ENCODE measurements at regions of chr6 and their contacts with region 1.

Region 1: DNA sequence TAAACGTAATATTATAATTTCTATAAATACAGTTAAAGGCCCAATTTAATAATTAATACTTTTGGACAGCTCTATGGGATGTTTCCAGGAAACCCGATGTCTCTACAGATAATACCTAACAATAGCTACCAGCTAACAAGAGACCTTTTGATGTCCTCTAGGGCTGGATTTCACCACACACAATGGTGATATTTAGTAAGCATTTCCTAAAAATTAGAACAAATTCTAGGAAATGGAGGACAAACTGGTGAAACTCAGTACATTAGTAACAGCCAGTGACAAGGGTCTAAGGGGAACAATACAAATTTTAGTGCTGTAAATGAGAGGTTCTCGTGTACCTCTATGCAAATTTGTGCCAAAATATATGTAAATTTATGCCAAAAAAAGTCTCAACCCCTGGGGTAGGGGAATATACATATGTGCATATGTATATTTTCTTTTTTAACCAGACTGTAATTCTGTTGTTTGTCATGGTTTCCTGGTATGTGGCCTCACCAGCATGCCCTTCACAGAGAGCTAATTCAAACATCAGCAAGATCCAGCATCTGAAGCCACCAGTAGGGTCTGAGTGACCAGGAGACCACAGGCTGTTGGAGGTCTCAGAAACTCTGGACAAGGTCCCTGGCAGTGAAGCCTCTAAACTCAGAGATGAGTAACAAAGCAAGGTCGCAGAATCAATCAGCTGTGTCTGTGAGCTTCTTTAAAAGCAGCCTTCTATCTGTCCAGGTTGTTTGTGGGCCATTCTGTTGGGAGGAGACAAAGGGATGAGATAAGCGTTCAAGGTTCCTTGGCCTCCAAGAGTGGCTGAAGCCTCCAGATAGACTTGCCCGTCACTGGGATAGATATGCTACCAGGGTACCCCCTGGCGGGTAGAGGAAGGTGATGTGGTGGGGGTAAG is 235.1 kb upstream of the RREB1 start:
- DNase-seq: no peak
- H3K4me3 ChIP-seq: no peak overlapping the region
- H3K27ac ChIP-seq: no peak overlapping the region
- H3K4me1 ChIP-seq: no peaks in the 10 kb centered on the region
- H3K27me3 ChIP-seq: no peaks in the 10 kb centered on the region
- CTCF ChIP-seq: no peak

Region 2: DNA sequence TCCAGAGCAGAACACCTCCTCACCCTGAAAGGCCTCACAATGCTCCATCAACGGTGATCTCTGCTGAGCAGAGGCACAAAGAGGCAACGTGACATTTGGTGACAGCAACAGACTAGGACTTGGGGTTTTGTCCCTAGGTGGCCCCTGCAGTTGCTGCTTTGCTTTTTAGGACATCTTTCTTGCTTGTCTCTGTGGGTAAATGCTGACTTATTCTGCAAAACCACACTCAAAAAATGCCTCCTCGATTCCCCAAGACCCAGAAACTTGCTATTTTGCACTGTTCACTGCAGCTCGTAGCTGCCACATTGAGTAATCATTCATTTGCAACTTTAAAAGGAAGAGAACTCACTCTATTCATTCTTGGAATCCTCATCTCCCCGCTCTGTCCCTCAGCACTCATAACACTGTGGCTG is 74.3 kb before region 1 on chr6:
- intact Hi-C with region 1: no loop called
- DNase-seq: no peak
- H3K4me3 ChIP-seq: no peak overlapping the region
- H3K27ac ChIP-seq: no peak overlapping the region
- H3K4me1 ChIP-seq: peaks cover 0 to under 1% (median 0%) of the 10 kb centered on the region in 4 donors
- H3K27me3 ChIP-seq: peaks cover 0 to 7% of the 10 kb centered on the region in 2 donors
- CTCF ChIP-seq: no peak

Region 3: GRCh38 chr6:6811151-6812002 is 61.3 kb before region 1 on chr6:
- intact Hi-C with region 1: loop called (anchors 1 kb)
- DNase-seq: no peak
- H3K4me3 ChIP-seq: peak overlapping the region; percentile 12 to 16
- H3K27ac ChIP-seq: no peak overlapping the region
- H3K4me1 ChIP-seq: no peaks in the 10 kb centered on the region
- H3K27me3 ChIP-seq: peaks cover 0 to 15% of the 10 kb centered on the region in 2 donors
- CTCF ChIP-seq: no peak

Measured in tibial artery (tissue), 4 donors.